ENCODE measurements at regions of chr1 and their contacts with region 1.

Region 1: GRCh38 chr1:119626841-119627240 is 21.2 kb downstream of the ZNF697 start:
- DNase-seq: no peak
- ATAC-seq: no peak
- H3K4me3 ChIP-seq: no peak overlapping the region
- H3K27ac ChIP-seq: no peak overlapping the region
- H3K4me1 ChIP-seq: no peaks in the 10 kb centered on the region; the same call in 1 of the 2 replicates
- H3K27me3 ChIP-seq: no peaks in the 10 kb centered on the region
- CTCF ChIP-seq: no peak

Region 2: GRCh38 chr1:119737040-119737682 is 110.3 kb after region 1 on chr1:
- CTCF ChIA-PET with region 1: interaction called, 11 read pairs
- POLR2A ChIA-PET with region 1: no interaction called
- intact Hi-C with region 1: no loop called
- DNase-seq: no peak
- ATAC-seq: no peak
- H3K4me3 ChIP-seq: no peak overlapping the region
- H3K27ac ChIP-seq: no peak overlapping the region
- H3K4me1 ChIP-seq: no peaks in the 10 kb centered on the region
- H3K27me3 ChIP-seq: no peaks in the 10 kb centered on the region
- CTCF ChIP-seq: no peak

Measured in PC-3 (cell line).